SK-N-SH (cell line): ENCODE measurements at regions of chr6 and their contacts with region 1.

Region 1: DNA sequence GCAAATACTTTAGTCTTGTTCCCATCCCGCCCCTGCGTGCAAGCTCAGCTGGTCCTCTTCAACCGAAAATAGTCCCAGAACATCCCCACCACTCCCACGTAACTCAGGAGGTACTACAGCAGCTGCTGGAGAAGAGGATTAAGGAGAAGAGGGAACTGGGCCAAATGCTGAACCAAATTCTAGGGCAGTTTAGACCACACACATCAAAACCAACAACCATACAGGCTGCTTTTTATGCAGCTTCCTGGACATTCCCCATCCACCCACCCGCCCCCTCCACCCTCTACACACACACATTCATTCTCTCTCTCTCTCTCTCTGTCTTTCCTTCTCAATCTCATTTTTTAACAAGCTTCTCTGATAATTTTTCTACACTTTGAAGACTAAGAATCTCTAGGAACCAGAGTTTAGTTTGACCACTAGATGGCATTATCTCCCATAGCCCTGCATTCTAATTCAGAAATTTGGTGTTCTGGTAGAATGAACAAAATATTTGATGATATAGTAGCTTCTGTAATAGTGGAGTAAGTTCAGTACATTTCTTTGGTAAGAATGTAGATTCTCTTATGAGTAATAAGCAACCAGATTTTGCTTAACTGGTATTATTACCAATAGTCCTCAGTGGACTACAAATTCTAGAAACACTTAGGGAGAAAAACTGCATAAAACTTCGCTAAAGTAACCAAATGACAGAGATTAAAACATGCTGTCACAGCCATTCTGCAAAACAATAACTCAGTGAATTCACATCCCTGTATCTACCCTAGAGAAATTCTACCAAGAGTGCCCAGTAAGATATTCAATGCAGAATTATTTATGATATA is 52.1 kb upstream of the BEND6 start:
- DNase-seq: peak; percentile 51
- H3K4me3 ChIP-seq: no peak overlapping the region; a peak in 1 of 4 replicates
- H3K27ac ChIP-seq: peak overlapping the region in 1 of 2 experiments; percentile 36; a peak in 2 of 4 replicates
- H3K4me1 ChIP-seq: peaks cover 0 to 23% of the 10 kb centered on the region in 2 experiments; a peak in 3 of 4 replicates
- H3K27me3 ChIP-seq: no peaks in the 10 kb centered on the region
- CTCF ChIP-seq: peak; percentile 88
- EP300 ChIP-seq: no peak
- RAD21 ChIP-seq: peak; percentile 79

Region 2: GRCh38 chr6:56890683-56891429 is 12.0 kb before region 1 on chr6:
- CTCF ChIA-PET with region 1: interaction called, 28 read pairs
- POLR2A ChIA-PET with region 1: no interaction called
- DNase-seq: no peak
- H3K4me3 ChIP-seq: 0 out of 4 replicates have a peak overlapping the region, but pooled peaks of 1 of the 2 experiments have one; percentile 6
- H3K27ac ChIP-seq: peak overlapping the region; percentile 45 to 97; a peak in 3 of 4 replicates
- H3K4me1 ChIP-seq: peaks cover 3 to 6% of the 10 kb centered on the region in 2 experiments; a peak in 3 of 4 replicates
- H3K27me3 ChIP-seq: no peaks in the 10 kb centered on the region
- CTCF ChIP-seq: no peak
- EP300 ChIP-seq: peak in 1 of 2 experiments; percentile 38; a peak in 2 of 4 replicates
- RAD21 ChIP-seq: no peak

Region 3: GRCh38 chr6:56930846-56931245 is 28.0 kb after region 1 on chr6:
- CTCF ChIA-PET with region 1: interaction called, 14 read pairs
- POLR2A ChIA-PET with region 1: no interaction called
- DNase-seq: no peak
- H3K4me3 ChIP-seq: no peak overlapping the region
- H3K27ac ChIP-seq: no peak overlapping the region
- H3K4me1 ChIP-seq: peaks cover 17 to 23% of the 10 kb centered on the region in 2 experiments; a peak in 3 of 4 replicates
- H3K27me3 ChIP-seq: no peaks in the 10 kb centered on the region
- CTCF ChIP-seq: no peak
- EP300 ChIP-seq: no peak
- RAD21 ChIP-seq: no peak

Region 4: GRCh38 chr6:56962451-56962850 is 59.6 kb after region 1 on chr6:
- CTCF ChIA-PET with region 1: interaction called, 76 read pairs
- POLR2A ChIA-PET with region 1: no interaction called
- DNase-seq: no peak
- H3K4me3 ChIP-seq: no peak overlapping the region
- H3K27ac ChIP-seq: peak overlapping the region in 1 of 2 experiments; percentile 16; a peak in 1 of 4 replicates
- H3K4me1 ChIP-seq: peaks cover 0 to 37% of the 10 kb centered on the region in 2 experiments; a peak in 2 of 4 replicates
- H3K27me3 ChIP-seq: no peaks in the 10 kb centered on the region
- CTCF ChIP-seq: no peak
- EP300 ChIP-seq: peak in 1 of 2 experiments; percentile 50; a peak in 1 of 4 replicates
- RAD21 ChIP-seq: no peak

Region 5: DNA sequence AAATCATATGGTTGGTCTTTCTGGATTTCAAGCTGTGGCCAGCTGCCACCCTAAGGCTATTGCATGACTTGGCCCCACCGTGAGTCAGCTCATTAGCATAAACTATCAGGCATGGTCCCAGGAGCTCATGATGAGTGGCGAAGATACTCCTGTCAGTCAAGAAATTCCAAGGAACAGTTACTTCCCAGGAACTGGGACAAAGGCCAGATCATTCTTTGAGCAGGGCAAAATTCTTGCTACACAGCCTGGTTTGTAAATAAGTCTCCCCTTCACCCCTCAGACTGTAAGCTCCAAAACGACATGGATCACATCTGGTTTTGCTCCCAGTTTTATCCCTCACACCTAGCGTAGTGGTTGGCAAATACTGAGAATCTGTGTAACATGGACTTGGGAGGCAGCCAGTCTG is 110.7 kb after region 1 on chr6:
- CTCF ChIA-PET with region 1: interaction called, 104 read pairs
- POLR2A ChIA-PET with region 1: no interaction called
- DNase-seq: no peak
- H3K4me3 ChIP-seq: no peak overlapping the region
- H3K27ac ChIP-seq: peak overlapping the region in 1 of 2 experiments; percentile 24; a peak in 2 of 4 replicates
- H3K4me1 ChIP-seq: peaks cover 4 to 5% of the 10 kb centered on the region in 2 experiments; a peak in 1 of 4 replicates
- H3K27me3 ChIP-seq: no peaks in the 10 kb centered on the region
- CTCF ChIP-seq: no peak
- EP300 ChIP-seq: no peak; a peak in 1 of 4 replicates
- RAD21 ChIP-seq: no peak

Region 6: DNA sequence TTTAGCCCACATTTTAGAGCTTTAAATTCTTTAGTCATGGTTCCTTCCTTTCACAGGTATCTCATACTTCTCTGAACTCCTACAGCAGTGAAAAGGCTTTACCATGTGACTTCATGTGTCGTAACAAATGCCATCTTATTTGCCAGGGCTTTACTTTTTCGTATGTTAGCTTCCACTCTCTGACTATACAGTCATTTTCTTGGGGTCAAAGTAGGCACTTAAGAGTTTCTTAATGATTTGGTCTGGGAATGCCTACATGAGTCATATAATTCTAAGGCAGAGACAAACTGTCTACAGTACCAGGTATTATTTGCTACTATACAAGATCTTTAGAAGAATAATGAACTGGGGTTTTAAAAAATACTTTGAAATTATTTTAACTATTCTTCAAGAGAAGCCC is 304.3 kb after region 1 on chr6:
- CTCF ChIA-PET with region 1: no interaction called
- POLR2A ChIA-PET with region 1: no interaction called
- DNase-seq: no peak
- H3K4me3 ChIP-seq: no peak overlapping the region
- H3K27ac ChIP-seq: peak overlapping the region in 1 of 2 experiments; percentile 12; a peak in 1 of 4 replicates
- H3K4me1 ChIP-seq: peaks cover 0 to 4% of the 10 kb centered on the region in 2 experiments; a peak in 2 of 4 replicates
- H3K27me3 ChIP-seq: no peaks in the 10 kb centered on the region
- CTCF ChIP-seq: no peak
- EP300 ChIP-seq: no peak
- RAD21 ChIP-seq: no peak

Region 7: DNA sequence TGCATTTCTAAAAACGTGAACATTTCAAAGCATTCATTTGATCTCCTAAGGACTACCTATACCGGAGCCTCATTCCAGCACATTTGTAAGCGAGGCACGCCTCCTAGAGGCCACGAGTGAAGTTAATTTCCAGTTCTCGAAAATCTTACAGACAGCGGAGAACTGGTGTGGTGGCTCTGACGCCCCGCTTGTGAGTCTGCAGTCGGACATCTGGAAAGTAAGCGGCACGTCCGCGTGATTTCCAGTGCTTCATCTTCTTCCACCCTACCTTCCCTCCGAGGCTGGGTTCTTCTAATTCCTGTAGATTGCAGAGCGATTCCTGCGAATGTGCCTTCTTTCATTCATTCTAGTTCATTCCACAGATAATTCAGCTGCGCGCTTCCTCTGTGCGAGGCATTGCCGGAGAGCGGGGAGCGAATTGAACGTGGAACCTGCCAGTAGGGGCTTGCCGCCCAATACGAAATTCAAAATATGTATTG is 413.8 kb after region 1 on chr6:
- CTCF ChIA-PET with region 1: interaction called, 64 read pairs
- POLR2A ChIA-PET with region 1: no interaction called
- DNase-seq: peak; percentile 69
- H3K4me3 ChIP-seq: peak overlapping the region; percentile 87 to 98
- H3K27ac ChIP-seq: peak overlapping the region; percentile 83 to 99
- H3K4me1 ChIP-seq: peaks cover 8 to 37% of the 10 kb centered on the region in 2 experiments
- H3K27me3 ChIP-seq: no peaks in the 10 kb centered on the region
- CTCF ChIP-seq: peak; percentile 66
- EP300 ChIP-seq: no peak
- RAD21 ChIP-seq: peak; percentile 91